MCF 10A (cell line): ENCODE measurements at regions of chr12 and their contacts with region 1.

Region 1: GRCh38 chr12:57904848-57905811 is 36.2 kb upstream of the ATP23 start:
- DNase-seq: peak; percentile 90
- H3K4me3 Mint-ChIP-seq: no peak overlapping the region
- H3K27ac Mint-ChIP-seq: no peak overlapping the region
- H3K4me1 Mint-ChIP-seq: peaks cover 8% of the 10 kb centered on the region
- H3K27me3 Mint-ChIP-seq: peaks cover 26% of the 10 kb centered on the region
- CTCF ChIP-seq: peak; percentile 100

Region 2: GRCh38 chr12:57759360-57759980 is 145.7 kb before region 1 on chr12:
- CTCF ChIA-PET with region 1: interaction called, 13 read pairs
- POLR2A ChIA-PET with region 1: no interaction called
- intact Hi-C with region 1: no loop called
- DNase-seq: peak; percentile 63
- H3K4me3 Mint-ChIP-seq: no peak overlapping the region
- H3K27ac Mint-ChIP-seq: no peak overlapping the region
- H3K4me1 Mint-ChIP-seq: peaks cover 21% of the 10 kb centered on the region
- H3K27me3 Mint-ChIP-seq: no peaks in the 10 kb centered on the region
- CTCF ChIP-seq: peak; percentile 33

Region 3: DNA sequence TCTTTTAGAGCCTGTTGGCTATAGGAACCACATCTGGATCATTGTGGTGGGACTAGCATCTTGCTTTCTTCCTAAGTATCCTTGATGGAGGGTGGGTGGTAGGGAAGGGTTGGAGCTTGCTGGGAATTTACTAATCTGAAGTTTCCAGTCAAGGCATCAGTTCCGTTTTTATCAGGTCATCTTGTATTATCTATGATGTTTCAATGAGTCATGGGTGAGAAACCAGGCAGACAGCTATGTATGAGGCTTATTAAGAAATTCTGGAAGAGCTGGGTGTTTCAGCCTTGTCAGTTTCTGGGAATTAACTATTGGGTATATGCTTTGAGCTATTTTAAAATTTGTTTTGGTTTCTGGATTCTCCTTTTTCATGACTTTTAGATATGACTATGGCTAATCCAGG is 111.2 kb before region 1 on chr12:
- CTCF ChIA-PET with region 1: interaction called, 27 read pairs
- POLR2A ChIA-PET with region 1: interaction called, 4 read pairs
- intact Hi-C with region 1: no loop called
- DNase-seq: peak; percentile 74
- H3K4me3 Mint-ChIP-seq: no peak overlapping the region
- H3K27ac Mint-ChIP-seq: no peak overlapping the region
- H3K4me1 Mint-ChIP-seq: peaks cover 9% of the 10 kb centered on the region
- H3K27me3 Mint-ChIP-seq: no peaks in the 10 kb centered on the region
- CTCF ChIP-seq: no peak

Region 4: DNA sequence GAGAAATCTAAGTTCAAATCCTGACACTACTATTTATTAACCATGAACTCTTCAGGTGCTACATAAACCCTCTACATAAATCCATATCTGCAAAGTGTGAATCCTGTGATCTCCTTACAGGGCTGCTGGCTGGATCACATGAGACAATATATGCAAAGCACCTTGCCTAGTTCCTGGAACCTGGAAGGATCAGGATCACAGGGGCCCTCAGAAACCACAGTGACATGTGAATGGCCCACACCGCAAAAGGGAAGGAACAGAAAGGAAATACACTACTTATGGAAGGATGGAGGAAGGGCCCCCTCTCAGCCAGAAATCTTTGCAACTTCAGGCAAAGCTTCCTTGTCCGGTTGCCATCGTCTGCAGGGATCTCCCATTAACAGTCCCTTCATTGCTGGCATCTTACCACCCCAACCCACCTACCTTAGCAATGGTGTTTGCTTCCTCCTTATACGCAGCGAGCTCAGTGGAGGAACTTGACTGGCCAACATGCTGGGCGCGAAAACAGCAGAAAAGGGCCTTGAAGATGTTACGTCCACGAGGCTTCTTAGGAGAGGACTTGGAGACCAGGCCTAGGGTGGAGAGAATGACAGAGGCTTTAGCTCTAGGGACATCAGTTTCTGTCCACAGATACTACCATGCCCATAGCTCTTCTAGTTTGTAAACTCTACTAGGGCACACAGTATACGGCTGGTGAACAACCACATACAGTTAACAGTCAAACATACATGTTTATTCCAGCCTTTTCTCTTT is 75.9 kb before region 1 on chr12:
- CTCF ChIA-PET with region 1: interaction called, 138 read pairs
- POLR2A ChIA-PET with region 1: interaction called, 3 read pairs
- intact Hi-C with region 1: loop called (anchors 1 kb)
- DNase-seq: no peak
- H3K4me3 Mint-ChIP-seq: no peak overlapping the region
- H3K27ac Mint-ChIP-seq: no peak overlapping the region
- H3K4me1 Mint-ChIP-seq: peaks cover 12% of the 10 kb centered on the region
- H3K27me3 Mint-ChIP-seq: no peaks in the 10 kb centered on the region
- CTCF ChIP-seq: no peak

Region 5: DNA sequence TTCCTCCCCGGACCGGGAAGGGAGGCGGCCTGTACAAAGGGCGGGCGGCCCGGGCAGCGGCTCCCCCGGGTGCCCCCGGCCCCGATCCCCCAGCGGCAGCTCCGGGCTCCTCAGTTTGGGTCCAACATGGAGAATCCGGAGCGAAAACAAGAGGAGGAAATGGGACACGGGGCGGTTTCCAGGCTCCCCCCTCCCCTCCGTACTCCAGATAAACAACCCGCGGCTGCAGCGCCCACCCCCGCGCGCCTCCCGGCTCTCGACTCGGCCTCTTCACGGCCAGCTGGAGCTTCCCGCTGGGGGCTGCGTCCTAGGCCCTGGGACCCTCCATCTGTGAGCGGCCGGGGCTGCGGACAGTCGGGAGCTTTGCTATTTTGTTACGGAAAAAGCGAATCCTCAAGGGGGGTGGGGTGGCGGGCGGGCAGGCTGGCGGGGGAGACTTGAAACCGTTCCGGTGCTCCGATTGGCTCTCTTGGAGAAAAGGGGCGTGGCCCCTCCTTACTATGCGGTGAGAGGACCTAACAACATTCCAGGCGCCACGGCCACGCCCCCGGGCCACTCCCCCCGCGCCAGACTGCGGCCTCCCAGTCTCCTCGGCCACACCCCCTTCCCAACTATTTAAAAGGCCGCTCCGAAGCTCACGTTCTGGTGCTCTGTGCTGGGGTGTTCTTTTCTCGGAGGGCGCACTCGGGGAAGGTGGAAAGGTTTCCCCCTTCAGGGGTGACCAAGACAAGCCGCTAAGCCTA is 58.4 kb before region 1 on chr12 and contains the start of gene CTDSP2:
- CTCF ChIA-PET with region 1: interaction called, 22 read pairs
- POLR2A ChIA-PET with region 1: interaction called, 167 read pairs
- intact Hi-C with region 1: no loop called
- DNase-seq: peak; percentile 98
- H3K4me3 Mint-ChIP-seq: peak within 1 kb of the TSS; percentile 81
- H3K27ac Mint-ChIP-seq: peak within 1 kb of the TSS; percentile 69
- H3K4me1 Mint-ChIP-seq: peaks cover 25% of the 10 kb centered on the region
- H3K27me3 Mint-ChIP-seq: peaks cover 9% of the 10 kb centered on the region
- CTCF ChIP-seq: no peak
- total RNA-seq, gene CTDSP2: 73.4 and 76.5 TPM in 2 replicates

Region 6: GRCh38 chr12:57983146-57983857 is 78.2 kb after region 1 on chr12:
- CTCF ChIA-PET with region 1: no interaction called
- POLR2A ChIA-PET with region 1: no interaction called
- intact Hi-C with region 1: no loop called
- DNase-seq: peak; percentile 65
- H3K4me3 Mint-ChIP-seq: no peak overlapping the region
- H3K27ac Mint-ChIP-seq: no peak overlapping the region
- H3K4me1 Mint-ChIP-seq: peaks cover 6% of the 10 kb centered on the region
- H3K27me3 Mint-ChIP-seq: no peaks in the 10 kb centered on the region
- CTCF ChIP-seq: peak; percentile 72